Prostate gland (tissue), 2 donors: ENCODE measurements at regions of chr7 and their contacts with region 1.

Region 1: DNA sequence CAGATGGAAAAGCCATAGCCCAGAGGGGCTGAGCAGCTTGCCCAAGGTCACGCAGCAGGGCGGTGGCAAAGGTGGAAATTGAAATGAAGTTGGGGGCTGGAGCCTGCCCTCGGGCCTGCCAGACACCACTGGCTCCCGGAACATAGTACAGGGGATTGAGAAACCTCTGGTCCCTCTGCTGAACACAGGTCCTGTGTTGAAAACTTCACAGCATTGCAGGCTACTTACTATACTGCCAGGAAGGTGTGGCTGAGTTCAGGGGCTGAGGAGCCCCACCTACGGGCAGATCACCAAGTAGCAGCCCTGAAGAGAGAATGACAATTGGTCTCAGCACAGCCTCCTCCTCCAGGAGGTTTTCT is 326.7 kb downstream of the PLXNA4 start:
- DNase-seq: peak; percentile 76
- H3K4me3 ChIP-seq: no peak overlapping the region
- H3K27ac ChIP-seq: peak overlapping the region; percentile 71 to 83
- H3K4me1 ChIP-seq: peaks cover 14% of the 10 kb centered on the region
- H3K27me3 ChIP-seq: no peaks in the 10 kb centered on the region
- CTCF ChIP-seq: peak in 3 of 4 experiments; percentile 18 to 44 (median 40)
- POLR2A ChIP-seq: no peak

Region 2: GRCh38 chr7:131945313-131945911 is 304.2 kb before region 1 on chr7:
- intact Hi-C with region 1: loop called (anchors 5 kb)
- DNase-seq: peak; percentile 26
- H3K4me3 ChIP-seq: peak overlapping the region in 1 of 2 donors; percentile 2
- H3K27ac ChIP-seq: no peak overlapping the region
- H3K4me1 ChIP-seq: no peaks in the 10 kb centered on the region
- H3K27me3 ChIP-seq: no peaks in the 10 kb centered on the region
- CTCF ChIP-seq: peak; percentile 56 to 89 (median 82)
- POLR2A ChIP-seq: no peak

Region 3: DNA sequence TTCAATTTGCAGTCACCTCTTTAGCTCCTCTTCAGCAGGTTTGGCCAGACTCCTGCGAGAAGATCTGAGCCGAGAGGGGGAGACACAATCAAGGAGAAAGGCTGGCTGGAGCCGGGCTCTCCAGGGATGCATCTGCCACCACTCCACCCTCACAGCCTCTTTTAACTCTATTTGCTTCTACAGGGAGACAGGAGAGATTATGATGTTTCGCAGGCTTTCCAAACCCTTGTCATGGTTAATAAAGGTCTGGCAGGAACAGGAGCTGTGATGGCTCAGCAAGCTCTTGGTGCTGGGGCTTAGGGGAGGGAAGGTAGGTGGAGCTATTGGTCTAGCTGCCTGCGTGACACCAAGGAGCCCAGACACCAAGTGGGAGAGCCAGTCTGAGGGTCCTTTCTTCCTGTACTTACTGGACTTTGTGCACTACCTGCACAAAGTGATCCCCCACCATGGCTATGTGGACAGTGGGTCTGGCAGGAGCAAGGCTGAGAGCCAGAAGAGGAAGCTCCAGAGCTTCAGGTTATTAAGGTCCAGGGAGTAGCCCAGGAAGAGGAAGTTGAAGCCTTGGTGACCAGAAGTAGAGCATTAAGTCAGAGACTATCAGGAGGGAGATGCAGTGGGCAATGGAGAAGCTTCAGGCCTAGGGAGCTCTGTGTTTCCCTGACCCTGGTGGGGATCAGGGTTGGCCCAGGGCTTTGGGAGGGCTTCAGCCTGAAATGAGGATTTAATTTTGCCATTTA is 244.9 kb before region 1 on chr7:
- intact Hi-C with region 1: loop called (anchors 10 kb)
- DNase-seq: peak; percentile 21
- H3K4me3 ChIP-seq: no peak overlapping the region
- H3K27ac ChIP-seq: no peak overlapping the region
- H3K4me1 ChIP-seq: no peaks in the 10 kb centered on the region
- H3K27me3 ChIP-seq: no peaks in the 10 kb centered on the region
- CTCF ChIP-seq: peak in 1 of 4 experiments; percentile 34
- POLR2A ChIP-seq: no peak